T-cell (primary cell): ENCODE measurements at regions of chr12 and their contacts with region 1.

Region 1: GRCh38 chr12:44875954-44876553 is at the start of gene NELL2:
- DNase-seq: peak; percentile 29 to 76 (median 62)
- ATAC-seq: peak; percentile 76 to 82 (median 80)
- H3K4me3 ChIP-seq: peak within 1 kb of the TSS; percentile 66 to 94
- H3K4me3 Mint-ChIP-seq: peak within 1 kb of the TSS; percentile 94 to 99 (median 99)
- H3K27ac ChIP-seq: peak within 1 kb of the TSS; percentile 3
- H3K27ac Mint-ChIP-seq: peak within 1 kb of the TSS; percentile 82 to 92
- H3K4me1 ChIP-seq: peaks cover 3 to 21% of the 10 kb centered on the region in 2 experiments
- H3K4me1 Mint-ChIP-seq: peaks cover 41 to 51% (median 42%) of the 10 kb centered on the region in 3 donors
- H3K27me3 ChIP-seq: peaks cover 3 to 20% of the 10 kb centered on the region in 2 experiments
- H3K27me3 Mint-ChIP-seq: peaks cover 7 to 13% of the 10 kb centered on the region in 2 donors
- total RNA-seq, gene NELL2: 154 to 212 (median 169) TPM

Region 2: GRCh38 chr12:44774815-44775411 is 101.1 kb before region 1 on chr12:
- CTCF ChIA-PET with region 1: interaction called, 9 to 21 read pairs
- POLR2A ChIA-PET with region 1: no interaction called
- DNase-seq: peak; percentile 7 to 78 (median 50)
- ATAC-seq: peak in 1 of 4 experiments; percentile 60
- H3K4me3 ChIP-seq: no peak overlapping the region
- H3K4me3 Mint-ChIP-seq: no peak overlapping the region
- H3K27ac ChIP-seq: no peak overlapping the region
- H3K27ac Mint-ChIP-seq: no peak overlapping the region
- H3K4me1 ChIP-seq: no peaks in the 10 kb centered on the region
- H3K4me1 Mint-ChIP-seq: peaks cover 0 to 7% (median 4%) of the 10 kb centered on the region in 3 donors
- H3K27me3 ChIP-seq: no peaks in the 10 kb centered on the region
- H3K27me3 Mint-ChIP-seq: no peaks in the 10 kb centered on the region

Region 3: DNA sequence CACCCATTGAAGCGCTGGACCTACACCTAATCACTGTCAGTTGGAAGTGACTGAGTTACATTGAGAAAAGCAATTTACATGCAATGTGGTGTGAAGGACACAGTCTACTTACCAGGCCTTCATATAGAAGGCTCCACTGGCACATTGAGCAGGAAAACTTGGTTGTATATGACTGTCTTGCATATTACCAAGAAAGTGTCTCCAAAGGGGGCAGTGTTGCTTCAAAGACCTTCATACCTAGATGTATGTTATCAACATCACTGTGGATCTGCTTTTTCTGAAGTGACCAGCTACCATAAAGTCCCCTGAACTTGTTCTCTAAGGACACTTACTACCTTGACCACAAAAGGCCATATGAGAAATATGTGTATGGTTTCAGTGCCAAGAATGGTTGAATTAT is 64.0 kb before region 1 on chr12:
- CTCF ChIA-PET with region 1: interaction called, 38 to 82 read pairs
- POLR2A ChIA-PET with region 1: interaction called in 1 of 2 experiments, 4 read pairs
- DNase-seq: peak in 27 of 35 experiments; percentile 16 to 83 (median 46)
- ATAC-seq: peak; percentile 70 to 85 (median 82)
- H3K4me3 ChIP-seq: no peak overlapping the region
- H3K4me3 Mint-ChIP-seq: no peak overlapping the region
- H3K27ac ChIP-seq: no peak overlapping the region
- H3K27ac Mint-ChIP-seq: peak overlapping the region; percentile 62 to 64
- H3K4me1 ChIP-seq: peaks cover 11 to 20% of the 10 kb centered on the region in 2 experiments
- H3K4me1 Mint-ChIP-seq: peaks cover 42 to 54% (median 53%) of the 10 kb centered on the region in 3 donors
- H3K27me3 ChIP-seq: no peaks in the 10 kb centered on the region
- H3K27me3 Mint-ChIP-seq: no peaks in the 10 kb centered on the region

Region 4: DNA sequence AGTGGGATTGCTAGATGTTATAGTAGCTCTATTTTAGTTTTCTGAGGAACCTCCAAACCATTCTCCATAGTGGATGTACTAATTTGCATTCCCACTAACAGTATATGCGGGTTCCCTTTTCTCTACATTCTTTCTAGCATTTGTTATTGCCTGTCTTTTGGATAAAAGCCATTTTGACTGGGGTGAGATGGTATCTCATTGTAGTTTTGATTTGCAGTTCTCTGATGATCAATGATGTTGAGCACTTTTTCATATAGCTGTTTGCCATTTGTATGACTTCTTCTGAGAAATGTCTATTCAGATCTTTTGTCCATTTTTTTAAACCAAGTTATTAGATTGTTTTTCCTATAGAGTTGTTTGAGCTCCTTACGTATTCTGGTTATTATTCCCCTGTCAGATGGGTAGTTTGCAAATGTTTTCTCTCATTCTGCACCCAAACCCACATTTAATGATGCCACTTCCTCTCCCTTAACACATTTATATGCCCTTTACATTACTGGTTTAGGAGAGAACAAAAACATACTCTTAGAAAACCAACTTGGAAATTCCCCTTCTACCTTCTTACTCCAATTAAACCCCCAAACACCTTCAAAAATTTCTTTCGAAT is 48.1 kb before region 1 on chr12:
- CTCF ChIA-PET with region 1: interaction called in 1 of 2 experiments, 18 read pairs
- POLR2A ChIA-PET with region 1: interaction called, 4 to 7 read pairs
- DNase-seq: peak in 3 of 35 experiments; percentile 15 to 81 (median 22)
- ATAC-seq: peak; percentile 84 to 94 (median 86)
- H3K4me3 ChIP-seq: peak overlapping the region in 1 of 2 donors; percentile 0
- H3K4me3 Mint-ChIP-seq: peak overlapping the region; percentile 61 to 73 (median 64)
- H3K27ac ChIP-seq: peak overlapping the region; percentile 56
- H3K27ac Mint-ChIP-seq: peak overlapping the region; percentile 95 to 98
- H3K4me1 ChIP-seq: peaks cover 17 to 28% of the 10 kb centered on the region in 2 experiments
- H3K4me1 Mint-ChIP-seq: peaks cover 44 to 75% (median 74%) of the 10 kb centered on the region in 3 donors
- H3K27me3 ChIP-seq: no peaks in the 10 kb centered on the region
- H3K27me3 Mint-ChIP-seq: no peaks in the 10 kb centered on the region

Region 5: DNA sequence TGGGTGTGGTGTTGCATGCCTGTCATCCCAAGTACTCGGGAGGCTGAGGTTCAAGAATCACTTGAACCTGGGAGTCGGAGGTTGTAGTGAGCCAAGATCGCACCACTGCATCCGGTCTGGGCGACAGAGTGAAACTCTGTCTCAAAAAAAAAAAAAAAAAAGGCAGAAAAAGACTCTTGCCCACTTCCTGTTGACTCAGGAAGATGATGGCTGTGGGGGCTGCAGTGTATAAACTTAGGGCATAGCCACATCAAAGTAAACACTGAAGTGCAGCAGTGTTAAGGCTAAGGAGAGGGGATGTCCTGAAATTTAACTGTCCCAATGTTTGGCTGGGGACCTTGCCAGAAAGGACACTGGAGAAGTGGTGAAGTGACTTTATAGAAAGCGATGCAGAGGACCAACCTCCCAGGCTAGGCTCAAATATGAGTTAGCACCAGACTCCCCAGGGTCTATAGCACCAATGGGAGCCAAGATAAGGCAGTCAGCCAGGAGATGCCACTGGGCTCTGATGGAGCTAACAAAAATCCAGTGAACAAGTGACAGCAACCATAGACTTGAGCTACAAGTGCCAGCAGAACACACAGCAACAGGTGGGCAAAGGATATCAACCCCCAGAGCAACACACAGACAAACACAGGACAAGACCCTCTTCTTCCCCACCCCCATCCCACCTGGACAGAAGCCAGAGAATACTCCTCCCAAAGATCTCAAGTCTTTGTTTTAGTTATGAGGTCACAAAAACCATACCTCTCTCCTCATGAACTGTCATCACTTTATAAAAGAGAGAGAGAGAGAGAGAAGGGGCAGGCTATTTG is 28.0 kb before region 1 on chr12:
- CTCF ChIA-PET with region 1: interaction called in 1 of 2 experiments, 11 read pairs
- POLR2A ChIA-PET with region 1: interaction called in 1 of 2 experiments, 3 read pairs
- DNase-seq: peak; percentile 47 to 86 (median 69)
- ATAC-seq: peak; percentile 90 to 93 (median 91)
- H3K4me3 ChIP-seq: peak overlapping the region in 1 of 2 donors; percentile 7
- H3K4me3 Mint-ChIP-seq: peak overlapping the region; percentile 57 to 71 (median 63)
- H3K27ac ChIP-seq: peak overlapping the region; percentile 89
- H3K27ac Mint-ChIP-seq: peak overlapping the region; percentile 95 to 96
- H3K4me1 ChIP-seq: peaks cover 31 to 63% of the 10 kb centered on the region in 2 experiments
- H3K4me1 Mint-ChIP-seq: peaks cover 80 to 89% (median 86%) of the 10 kb centered on the region in 3 donors
- H3K27me3 ChIP-seq: no peaks in the 10 kb centered on the region
- H3K27me3 Mint-ChIP-seq: no peaks in the 10 kb centered on the region